B cell (primary cell): ENCODE measurements at regions of chr6 and their contacts with region 1.

Region 1: GRCh38 chr6:34709386-34709785 is 12.8 kb upstream of the ILRUN start:
- DNase-seq: no peak
- ATAC-seq: no peak
- H3K4me3 ChIP-seq: no peak overlapping the region
- H3K4me3 Mint-ChIP-seq: no peak overlapping the region
- H3K27ac ChIP-seq: no peak overlapping the region
- H3K27ac Mint-ChIP-seq: no peak overlapping the region
- H3K4me1 ChIP-seq: no peaks in the 10 kb centered on the region
- H3K4me1 Mint-ChIP-seq: no peaks in the 10 kb centered on the region
- H3K27me3 ChIP-seq: no peaks in the 10 kb centered on the region
- H3K27me3 Mint-ChIP-seq: no peaks in the 10 kb centered on the region
- CTCF ChIP-seq: no peak

Region 2: GRCh38 chr6:35742797-35743196 is 1033.4 kb after region 1 on chr6:
- CTCF ChIA-PET with region 1: no interaction called
- POLR2A ChIA-PET with region 1: interaction called, 11 read pairs
- intact Hi-C with region 1: no loop called
- DNase-seq: no peak
- ATAC-seq: no peak
- H3K4me3 ChIP-seq: no peak overlapping the region
- H3K4me3 Mint-ChIP-seq: no peak overlapping the region
- H3K27ac ChIP-seq: no peak overlapping the region
- H3K27ac Mint-ChIP-seq: no peak overlapping the region
- H3K4me1 ChIP-seq: no peaks in the 10 kb centered on the region
- H3K4me1 Mint-ChIP-seq: no peaks in the 10 kb centered on the region
- H3K27me3 ChIP-seq: no peaks in the 10 kb centered on the region
- H3K27me3 Mint-ChIP-seq: no peaks in the 10 kb centered on the region
- CTCF ChIP-seq: no peak